ENCODE measurements at regions of chr6 and their contacts with region 1.

Region 1: GRCh38 chr6:161029195-161029809 is 37.7 kb downstream of the MAP3K4 start:
- DNase-seq: peak; percentile 88
- ATAC-seq: peak; percentile 88
- H3K4me3 ChIP-seq: peak overlapping the region; percentile 39; the same call in 1 of the 2 replicates
- H3K27ac ChIP-seq: peak overlapping the region; percentile 80
- H3K4me1 ChIP-seq: peaks cover 21% of the 10 kb centered on the region
- H3K27me3 ChIP-seq: no peaks in the 10 kb centered on the region
- CTCF ChIP-seq: no peak
- EP300 ChIP-seq: peak; percentile 86 to 87
- POLR2A ChIP-seq: no peak
- RAD21 ChIP-seq: no peak

Region 2: GRCh38 chr6:160992061-160992979 is 37.0 kb before region 1 on chr6:
- CTCF ChIA-PET with region 1: interaction called, 18 read pairs
- POLR2A ChIA-PET with region 1: interaction called, 4 read pairs
- RAD21 ChIA-PET with region 1: interaction called, 18 read pairs
- SMC1A ChIA-PET with region 1: interaction called, 30 read pairs
- in situ Hi-C with region 1: no loop called
- intact Hi-C with region 1: loop called (anchors 2 kb)
- DNase-seq: no peak
- ATAC-seq: peak; percentile 68
- H3K4me3 ChIP-seq: peak overlapping the region; percentile 95
- H3K27ac ChIP-seq: peak overlapping the region; percentile 69
- H3K4me1 ChIP-seq: no peaks in the 10 kb centered on the region; the same call in 1 of the 2 replicates
- H3K27me3 ChIP-seq: no peaks in the 10 kb centered on the region
- CTCF ChIP-seq: peak; percentile 55 to 64 (median 55)
- EP300 ChIP-seq: no peak
- POLR2A ChIP-seq: peak; percentile 26
- RAD21 ChIP-seq: peak; percentile 62

Region 3: GRCh38 chr6:161001421-161001820 is 27.9 kb before region 1 on chr6:
- CTCF ChIA-PET with region 1: interaction called, 5 read pairs
- POLR2A ChIA-PET with region 1: interaction called, 6 read pairs
- RAD21 ChIA-PET with region 1: interaction called, 4 read pairs
- SMC1A ChIA-PET with region 1: interaction called, 17 read pairs
- in situ Hi-C with region 1: no loop called
- intact Hi-C with region 1: no loop called
- DNase-seq: no peak
- ATAC-seq: no peak
- H3K4me3 ChIP-seq: no peak overlapping the region
- H3K27ac ChIP-seq: no peak overlapping the region
- H3K4me1 ChIP-seq: no peaks in the 10 kb centered on the region; the same call in 1 of the 2 replicates
- H3K27me3 ChIP-seq: no peaks in the 10 kb centered on the region
- CTCF ChIP-seq: no peak
- EP300 ChIP-seq: no peak
- POLR2A ChIP-seq: no peak
- RAD21 ChIP-seq: no peak

Region 4: GRCh38 chr6:161011492-161012480 is 17.5 kb before region 1 on chr6:
- CTCF ChIA-PET with region 1: interaction called, 10 read pairs
- POLR2A ChIA-PET with region 1: no interaction called
- RAD21 ChIA-PET with region 1: interaction called, 4 read pairs
- SMC1A ChIA-PET with region 1: interaction called, 9 read pairs
- in situ Hi-C with region 1: no loop called
- intact Hi-C with region 1: no loop called
- DNase-seq: no peak
- ATAC-seq: peak; percentile 52; the same call in 2 of the 3 replicates
- H3K4me3 ChIP-seq: no peak overlapping the region
- H3K27ac ChIP-seq: no peak overlapping the region
- H3K4me1 ChIP-seq: no peaks in the 10 kb centered on the region
- H3K27me3 ChIP-seq: no peaks in the 10 kb centered on the region
- CTCF ChIP-seq: no peak
- EP300 ChIP-seq: no peak
- POLR2A ChIP-seq: no peak
- RAD21 ChIP-seq: no peak